Activated CD8-positive, alpha-beta T cell treated with anti-CD3 and anti-CD28 coated beads, Interleukin-2, amount 10 ng/mL, durations not matched to agents 7 days and 5 days (primary cell): ENCODE measurements at regions of chr16 and their contacts with region 1.

Region 1: GRCh38 chr16:11255737-11256660 is at the start of gene SOCS1:
- DNase-seq: peak; percentile 91
- ATAC-seq: peak; percentile 71
- H3K4me3 Mint-ChIP-seq: peak within 1 kb of the TSS; percentile 97
- H3K27ac Mint-ChIP-seq: peak within 1 kb of the TSS; percentile 96
- H3K4me1 Mint-ChIP-seq: peaks cover 54% of the 10 kb centered on the region
- H3K27me3 Mint-ChIP-seq: no peaks in the 10 kb centered on the region
- total RNA-seq, gene SOCS1: 170 to 174 TPM

Region 2: GRCh38 chr16:10942233-10943063 is 313.6 kb before region 1 on chr16 and contains the start of gene DEXI:
- CTCF ChIA-PET with region 1: no interaction called
- POLR2A ChIA-PET with region 1: no interaction called
- DNase-seq: peak; percentile 95
- ATAC-seq: peak; percentile 88
- H3K4me3 Mint-ChIP-seq: peak within 1 kb of the TSS; percentile 87
- H3K27ac Mint-ChIP-seq: peak within 1 kb of the TSS; percentile 77
- H3K4me1 Mint-ChIP-seq: peaks cover 77% of the 10 kb centered on the region
- H3K27me3 Mint-ChIP-seq: no peaks in the 10 kb centered on the region
- total RNA-seq, gene DEXI: 31.9 TPM

Region 3: GRCh38 chr16:10964039-10964890 is 291.7 kb before region 1 on chr16:
- CTCF ChIA-PET with region 1: interaction called, 210 read pairs
- POLR2A ChIA-PET with region 1: interaction called, 79 read pairs
- DNase-seq: peak; percentile 86
- ATAC-seq: peak; percentile 70
- H3K4me3 Mint-ChIP-seq: peak overlapping the region; percentile 42
- H3K27ac Mint-ChIP-seq: peak overlapping the region; percentile 83
- H3K4me1 Mint-ChIP-seq: peaks cover 69% of the 10 kb centered on the region
- H3K27me3 Mint-ChIP-seq: no peaks in the 10 kb centered on the region

Region 4: DNA sequence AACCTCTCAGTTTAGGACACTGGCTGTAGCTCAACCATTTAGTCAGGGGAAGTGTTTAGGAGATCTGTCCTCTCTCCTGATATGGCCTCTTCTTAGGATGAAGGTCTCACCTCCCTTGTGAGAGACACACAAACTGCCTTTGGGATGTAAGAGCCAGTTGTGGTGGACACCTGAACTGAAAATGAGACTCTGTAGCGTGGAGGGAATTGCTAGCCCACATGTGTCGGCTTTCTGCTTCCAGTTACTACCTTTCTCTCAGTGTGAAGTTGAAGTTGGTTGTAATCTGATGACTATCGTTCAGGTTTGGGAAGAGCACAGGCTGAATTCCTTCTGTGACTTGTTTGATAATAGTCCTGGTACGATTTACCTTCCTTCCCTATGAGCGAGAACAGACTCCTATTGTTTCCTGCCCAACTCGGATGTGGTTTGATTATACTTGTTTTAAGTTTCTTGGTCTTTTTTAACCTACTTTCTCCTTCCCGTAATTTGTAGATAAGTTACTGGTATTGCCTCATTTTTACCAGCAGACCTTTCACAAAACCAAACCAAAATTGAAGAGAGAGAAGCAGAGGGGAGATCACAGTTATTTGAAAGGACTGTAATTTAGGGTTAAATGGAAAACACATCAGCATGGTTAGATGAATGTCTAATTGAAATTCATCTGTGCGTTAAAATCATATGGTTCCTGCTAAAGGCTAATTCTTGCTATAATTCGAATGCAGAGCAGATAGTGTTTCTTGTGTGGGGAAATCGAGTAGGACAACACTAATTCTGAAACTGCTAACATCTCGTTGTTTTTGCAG is 268.4 kb before region 1 on chr16:
- CTCF ChIA-PET with region 1: interaction called, 19 read pairs
- POLR2A ChIA-PET with region 1: interaction called, 15 read pairs
- DNase-seq: peak; percentile 32
- ATAC-seq: peak; percentile 43
- H3K4me3 Mint-ChIP-seq: peak overlapping the region; percentile 38
- H3K27ac Mint-ChIP-seq: peak overlapping the region; percentile 79
- H3K4me1 Mint-ChIP-seq: peaks cover 90% of the 10 kb centered on the region
- H3K27me3 Mint-ChIP-seq: no peaks in the 10 kb centered on the region

Region 5: GRCh38 chr16:11105038-11105903 is 150.7 kb before region 1 on chr16:
- CTCF ChIA-PET with region 1: interaction called, 10 read pairs
- POLR2A ChIA-PET with region 1: interaction called, 15 read pairs
- DNase-seq: peak; percentile 65
- ATAC-seq: peak; percentile 66
- H3K4me3 Mint-ChIP-seq: peak overlapping the region; percentile 17
- H3K27ac Mint-ChIP-seq: peak overlapping the region; percentile 87
- H3K4me1 Mint-ChIP-seq: peaks cover 88% of the 10 kb centered on the region
- H3K27me3 Mint-ChIP-seq: no peaks in the 10 kb centered on the region

Region 6: DNA sequence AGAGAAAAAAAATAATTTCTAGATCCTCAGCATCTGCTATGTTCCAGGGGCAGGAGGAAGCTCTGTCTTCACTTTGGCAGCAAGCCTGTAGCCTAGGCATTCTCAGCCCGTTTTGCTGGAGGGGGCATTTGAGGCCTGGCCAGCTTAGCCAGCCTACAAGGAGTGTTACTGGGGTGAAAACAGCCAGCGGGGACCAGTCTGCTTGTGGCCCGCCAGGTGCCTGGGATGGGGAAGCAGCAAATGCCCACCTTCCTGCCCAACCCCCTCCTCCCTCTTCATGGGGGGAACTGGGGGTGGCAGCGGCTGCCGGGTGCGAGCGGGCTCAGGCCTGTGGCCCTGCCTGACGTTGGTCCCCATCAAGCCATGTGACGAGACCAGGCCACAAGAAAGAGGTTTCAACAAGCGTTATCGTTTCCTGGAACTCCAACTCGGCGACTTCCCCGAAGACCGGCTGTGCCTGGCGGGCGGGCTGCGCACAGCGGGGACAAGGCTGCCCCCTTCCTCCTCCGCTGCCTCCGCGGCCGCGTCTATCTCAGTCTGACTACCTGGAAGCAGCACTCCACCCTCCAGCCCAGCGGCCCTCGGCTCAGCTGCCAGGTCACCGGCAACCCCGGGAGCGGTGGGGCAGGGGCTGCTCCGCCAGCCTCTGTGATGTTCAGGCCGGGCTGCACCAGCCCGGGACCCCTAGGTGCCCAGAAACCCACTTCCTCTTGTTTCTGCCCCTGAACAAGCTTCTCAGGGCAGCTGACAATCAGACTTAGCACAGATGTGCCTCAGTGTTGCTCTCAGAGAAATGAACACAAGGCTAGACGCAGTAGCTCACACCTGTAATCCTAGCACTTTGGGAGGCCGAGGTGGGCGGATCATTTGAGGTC is 22.9 kb before region 1 on chr16:
- CTCF ChIA-PET with region 1: interaction called, 56 read pairs
- POLR2A ChIA-PET with region 1: interaction called, 122 read pairs
- DNase-seq: peak; percentile 97
- ATAC-seq: peak; percentile 90
- H3K4me3 Mint-ChIP-seq: peak overlapping the region; percentile 71
- H3K27ac Mint-ChIP-seq: peak overlapping the region; percentile 98
- H3K4me1 Mint-ChIP-seq: peaks cover 81% of the 10 kb centered on the region
- H3K27me3 Mint-ChIP-seq: no peaks in the 10 kb centered on the region

Region 7: DNA sequence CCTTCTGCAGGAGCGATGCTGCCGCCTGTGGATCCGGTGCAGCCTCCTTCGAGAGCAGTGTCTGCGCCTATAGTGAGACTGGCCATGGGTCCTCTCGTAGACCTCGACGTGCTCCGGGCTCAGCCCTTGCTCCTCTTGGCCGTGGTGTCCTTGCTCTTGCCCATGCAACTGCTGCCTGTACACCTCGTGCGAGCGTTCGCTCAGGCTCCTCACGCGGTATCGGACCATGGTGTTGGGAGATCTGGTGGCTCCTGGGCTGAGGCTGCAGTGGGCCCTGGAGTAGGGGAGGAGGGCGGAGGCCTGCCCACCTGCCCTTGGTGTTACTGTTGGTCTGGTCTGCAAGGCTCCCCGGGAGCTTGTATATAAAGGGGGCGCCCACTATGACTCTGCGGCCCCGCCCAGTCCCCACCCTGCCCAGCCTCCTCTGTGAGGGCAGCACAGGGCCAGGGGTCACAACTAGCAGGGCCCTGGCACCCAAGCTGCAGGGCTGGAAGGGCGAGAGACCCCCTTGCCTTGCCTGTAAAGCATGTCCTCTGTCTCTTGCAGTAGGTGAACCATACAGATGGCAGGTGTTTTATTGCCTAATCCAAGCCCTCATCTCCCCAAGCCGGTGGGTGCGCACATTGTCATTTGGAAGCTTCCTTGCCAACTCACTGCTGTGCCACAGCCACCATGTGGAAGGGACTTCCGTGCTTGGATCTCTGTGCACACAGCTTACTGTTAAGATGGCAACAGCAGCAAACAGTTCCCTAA is 20.3 kb after region 1 on chr16 and contains the start of gene PRM2:
- CTCF ChIA-PET with region 1: no interaction called
- POLR2A ChIA-PET with region 1: no interaction called
- DNase-seq: no peak
- ATAC-seq: no peak
- H3K4me3 Mint-ChIP-seq: no peak within 1 kb of the TSS
- H3K27ac Mint-ChIP-seq: no peak within 1 kb of the TSS
- H3K4me1 Mint-ChIP-seq: peaks cover 12% of the 10 kb centered on the region
- H3K27me3 Mint-ChIP-seq: no peaks in the 10 kb centered on the region
- total RNA-seq, gene PRM2: not detected

Region 8: DNA sequence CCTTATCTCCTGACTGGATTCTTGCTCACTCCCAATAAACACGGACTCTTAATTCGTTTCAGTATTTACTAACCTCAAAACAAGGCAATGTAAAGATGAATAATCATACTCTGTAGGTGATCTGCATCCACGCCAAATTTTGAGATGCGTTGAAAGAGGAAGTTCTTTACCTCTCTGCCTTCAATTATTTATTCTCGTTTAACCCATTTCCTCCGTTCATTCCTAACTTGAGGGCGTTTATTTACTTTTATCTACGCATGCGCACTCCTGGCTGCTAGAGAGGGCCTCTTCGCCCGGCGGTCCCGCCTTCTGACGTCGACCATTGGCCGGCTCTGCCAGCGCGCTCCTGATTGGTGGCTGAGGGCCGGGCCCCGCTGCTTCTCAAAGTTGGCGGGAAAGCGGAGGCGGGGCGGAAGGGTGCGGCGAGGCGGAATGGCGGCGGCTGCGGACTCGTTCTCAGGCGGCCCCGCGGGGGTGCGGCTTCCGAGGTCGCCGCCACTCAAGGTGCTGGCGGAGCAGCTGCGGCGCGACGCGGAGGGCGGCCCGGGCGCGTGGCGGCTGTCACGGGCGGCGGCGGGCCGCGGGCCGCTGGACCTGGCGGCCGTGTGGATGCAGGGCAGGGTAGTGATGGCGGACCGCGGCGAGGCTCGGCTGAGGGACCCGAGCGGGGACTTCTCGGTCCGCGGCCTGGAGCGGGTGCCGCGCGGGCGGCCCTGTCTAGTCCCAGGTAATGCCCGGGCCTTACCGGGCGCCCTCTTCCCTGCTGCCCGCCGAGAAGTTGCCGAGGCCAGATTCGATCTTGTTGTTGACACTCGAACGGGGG is 89.3 kb after region 1 on chr16 and contains the start of gene RMI2:
- CTCF ChIA-PET with region 1: interaction called, 3 read pairs
- POLR2A ChIA-PET with region 1: interaction called, 11 read pairs
- DNase-seq: peak; percentile 99
- ATAC-seq: peak; percentile 100
- H3K4me3 Mint-ChIP-seq: peak within 1 kb of the TSS; percentile 94
- H3K27ac Mint-ChIP-seq: peak within 1 kb of the TSS; percentile 86
- H3K4me1 Mint-ChIP-seq: peaks cover 68% of the 10 kb centered on the region
- H3K27me3 Mint-ChIP-seq: no peaks in the 10 kb centered on the region
- total RNA-seq, gene RMI2: 65.6 to 67.0 TPM

Region 9: DNA sequence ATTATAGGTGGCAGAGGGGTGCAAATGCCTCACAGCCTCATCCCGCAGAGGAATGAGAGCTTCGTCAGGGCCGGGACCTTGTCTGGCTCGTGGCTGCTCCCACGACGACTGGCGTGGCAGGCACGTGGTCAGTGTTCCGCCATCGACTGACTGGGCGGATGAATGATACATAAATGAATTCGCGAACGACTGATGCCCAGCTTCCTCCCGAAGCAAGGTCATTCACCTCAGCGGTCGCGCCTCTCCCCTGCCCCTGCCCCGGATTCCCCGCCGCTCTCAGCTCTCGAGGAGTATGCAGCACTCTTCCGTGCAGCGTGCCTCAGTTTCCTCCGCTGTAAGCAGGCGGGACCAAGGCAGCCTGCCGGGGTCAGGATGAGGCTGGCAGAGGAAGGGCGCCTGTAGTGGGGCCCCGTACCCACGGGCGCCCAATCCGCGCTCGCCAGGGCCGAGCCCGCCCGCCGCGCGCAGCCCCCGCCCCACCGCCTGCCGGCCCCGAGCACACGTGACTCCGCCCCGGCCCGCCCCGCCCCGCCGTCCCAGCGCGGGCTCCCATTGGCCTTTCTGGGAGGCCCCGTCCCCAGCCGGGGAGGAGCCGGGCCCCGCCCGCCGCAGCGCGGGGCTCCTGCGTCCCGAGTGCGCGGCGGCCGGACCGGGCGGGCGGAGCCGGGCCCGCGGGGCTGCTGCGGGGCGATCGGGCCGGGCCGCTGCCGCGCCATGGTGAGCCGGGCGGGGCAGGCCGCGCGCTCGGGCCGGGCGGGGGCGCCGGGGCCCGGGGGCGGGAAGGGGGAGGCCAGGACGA is 412.0 kb after region 1 on chr16 and contains the start of gene SNN:
- CTCF ChIA-PET with region 1: no interaction called
- POLR2A ChIA-PET with region 1: no interaction called
- DNase-seq: peak; percentile 89
- ATAC-seq: peak; percentile 89
- H3K4me3 Mint-ChIP-seq: peak within 1 kb of the TSS; percentile 84
- H3K27ac Mint-ChIP-seq: peak within 1 kb of the TSS; percentile 97
- H3K4me1 Mint-ChIP-seq: peaks cover 78% of the 10 kb centered on the region
- H3K27me3 Mint-ChIP-seq: no peaks in the 10 kb centered on the region
- total RNA-seq, gene SNN: 27.3 to 28.9 TPM